Activated B cell treated with CpG ODN at 0.5 μM for 24 hours (primary cell): ENCODE measurements at regions of chr17 and their contacts with region 1.

Region 1: GRCh38 chr17:20121359-20122253 is 112.4 kb downstream of the SPECC1 start:
- DNase-seq: peak; percentile 52
- ATAC-seq: peak; percentile 71
- H3K4me3 Mint-ChIP-seq: no peak overlapping the region
- H3K27ac Mint-ChIP-seq: no peak overlapping the region
- H3K4me1 Mint-ChIP-seq: no peaks in the 10 kb centered on the region
- H3K27me3 Mint-ChIP-seq: peaks cover 1% of the 10 kb centered on the region
- CTCF ChIP-seq: peak; percentile 80

Region 2: GRCh38 chr17:19513897-19514488 is 607.6 kb before region 1 on chr17:
- CTCF ChIA-PET with region 1: no interaction called
- POLR2A ChIA-PET with region 1: no interaction called
- intact Hi-C with region 1: loop called (anchors 5 kb)
- DNase-seq: peak; percentile 54
- ATAC-seq: peak; percentile 85
- H3K4me3 Mint-ChIP-seq: no peak overlapping the region
- H3K27ac Mint-ChIP-seq: no peak overlapping the region
- H3K4me1 Mint-ChIP-seq: peaks cover 8% of the 10 kb centered on the region
- H3K27me3 Mint-ChIP-seq: no peaks in the 10 kb centered on the region
- CTCF ChIP-seq: peak; percentile 92

Region 3: DNA sequence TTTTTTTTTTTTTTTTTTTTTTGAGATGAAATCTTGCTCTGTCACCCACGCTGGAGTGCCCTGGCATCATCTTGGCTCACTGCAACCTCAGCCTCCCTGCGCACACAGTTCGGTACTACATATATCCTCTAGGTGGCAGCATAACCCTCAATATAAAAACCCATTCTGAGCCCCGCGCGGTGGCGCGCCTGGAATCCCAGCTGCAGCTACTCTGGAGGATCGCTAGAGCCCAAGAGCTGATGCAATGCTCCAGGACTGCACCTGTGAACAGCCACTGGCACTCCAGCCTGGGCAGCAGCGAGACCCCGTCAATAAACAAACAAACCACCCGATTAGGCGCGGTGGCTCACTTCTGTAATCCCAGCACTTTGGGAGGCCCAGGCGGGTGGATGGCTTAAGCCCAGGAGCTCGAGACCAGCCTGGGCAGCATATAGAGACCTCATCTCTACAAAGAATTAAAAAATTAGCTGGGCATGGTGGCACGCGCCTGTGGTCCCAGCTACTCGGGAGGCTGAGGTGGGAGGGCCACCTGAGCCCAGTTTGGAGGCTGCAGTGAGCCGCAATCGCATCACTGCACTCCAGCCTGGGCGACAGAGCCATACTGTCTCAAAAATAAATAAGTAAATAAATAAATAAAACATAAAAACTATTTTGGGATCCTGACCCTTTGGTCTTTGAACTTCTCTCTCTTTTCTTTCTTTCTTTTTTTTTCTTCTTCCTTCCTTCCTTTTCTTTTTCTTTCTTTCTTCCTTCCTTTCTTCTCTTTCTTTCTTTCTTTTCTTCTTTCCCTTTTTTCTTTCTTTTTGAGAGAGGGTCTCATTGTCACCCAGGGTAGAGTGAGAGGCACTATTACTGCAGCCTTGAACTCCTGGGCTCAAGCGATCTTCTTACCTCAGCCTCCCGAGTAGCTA is 128.5 kb before region 1 on chr17:
- CTCF ChIA-PET with region 1: interaction called, 25 read pairs
- POLR2A ChIA-PET with region 1: no interaction called
- intact Hi-C with region 1: loop called (anchors 1 kb)
- DNase-seq: peak; percentile 47
- ATAC-seq: peak; percentile 98
- H3K4me3 Mint-ChIP-seq: no peak overlapping the region
- H3K27ac Mint-ChIP-seq: no peak overlapping the region
- H3K4me1 Mint-ChIP-seq: peaks cover 4% of the 10 kb centered on the region
- H3K27me3 Mint-ChIP-seq: peaks cover 14% of the 10 kb centered on the region
- CTCF ChIP-seq: peak; percentile 25

Region 4: DNA sequence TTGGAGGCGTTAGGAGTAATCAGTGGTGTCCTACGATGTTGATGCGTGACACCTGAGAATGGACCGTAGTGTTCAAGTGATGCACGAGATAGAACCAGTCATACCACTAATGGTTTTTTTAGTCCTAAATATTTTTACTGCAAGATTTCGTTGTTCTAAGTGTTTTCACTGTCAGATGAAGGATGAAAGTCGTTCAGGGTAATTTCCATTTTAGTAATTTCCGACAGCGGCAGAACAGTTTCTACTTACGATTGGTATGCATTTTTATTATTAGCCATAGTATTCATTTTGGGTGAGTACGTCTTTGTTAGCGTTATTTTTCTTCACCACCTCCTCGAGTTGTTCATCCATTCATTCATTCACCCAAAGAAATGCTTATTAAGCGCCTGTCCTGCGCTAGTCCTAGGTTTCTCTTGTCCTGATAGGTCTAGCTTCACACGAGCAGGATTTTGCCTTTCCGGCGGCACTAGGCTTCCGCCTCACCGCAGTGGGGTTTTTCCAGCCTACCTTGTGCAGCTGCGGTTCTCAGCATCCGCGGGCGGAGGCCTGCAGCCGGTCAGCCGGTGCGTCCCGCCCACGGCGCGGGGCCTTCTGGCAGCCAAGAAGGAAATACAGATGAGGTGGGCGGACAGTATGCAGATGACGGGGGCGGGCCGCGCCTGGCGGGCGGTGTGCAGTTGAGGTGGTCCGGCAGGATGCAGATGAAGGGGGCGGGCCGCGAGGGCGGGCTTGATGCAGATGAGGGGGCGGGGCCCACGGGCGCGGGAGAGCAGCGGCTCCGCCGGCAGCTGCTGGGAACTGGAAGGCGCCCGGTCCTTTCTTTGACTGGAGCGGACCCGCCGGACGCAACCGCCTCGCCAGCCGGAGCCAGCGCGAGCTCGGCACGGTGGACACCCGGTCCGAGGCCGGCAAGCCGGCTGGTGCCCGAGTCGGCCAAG is 33.9 kb after region 1 on chr17:
- CTCF ChIA-PET with region 1: interaction called, 4 read pairs
- POLR2A ChIA-PET with region 1: no interaction called
- intact Hi-C with region 1: loop called (anchors 1 kb)
- DNase-seq: peak; percentile 99
- ATAC-seq: peak; percentile 93
- H3K4me3 Mint-ChIP-seq: no peak overlapping the region
- H3K27ac Mint-ChIP-seq: no peak overlapping the region
- H3K4me1 Mint-ChIP-seq: peaks cover 6% of the 10 kb centered on the region
- H3K27me3 Mint-ChIP-seq: no peaks in the 10 kb centered on the region
- CTCF ChIP-seq: no peak

Region 5: DNA sequence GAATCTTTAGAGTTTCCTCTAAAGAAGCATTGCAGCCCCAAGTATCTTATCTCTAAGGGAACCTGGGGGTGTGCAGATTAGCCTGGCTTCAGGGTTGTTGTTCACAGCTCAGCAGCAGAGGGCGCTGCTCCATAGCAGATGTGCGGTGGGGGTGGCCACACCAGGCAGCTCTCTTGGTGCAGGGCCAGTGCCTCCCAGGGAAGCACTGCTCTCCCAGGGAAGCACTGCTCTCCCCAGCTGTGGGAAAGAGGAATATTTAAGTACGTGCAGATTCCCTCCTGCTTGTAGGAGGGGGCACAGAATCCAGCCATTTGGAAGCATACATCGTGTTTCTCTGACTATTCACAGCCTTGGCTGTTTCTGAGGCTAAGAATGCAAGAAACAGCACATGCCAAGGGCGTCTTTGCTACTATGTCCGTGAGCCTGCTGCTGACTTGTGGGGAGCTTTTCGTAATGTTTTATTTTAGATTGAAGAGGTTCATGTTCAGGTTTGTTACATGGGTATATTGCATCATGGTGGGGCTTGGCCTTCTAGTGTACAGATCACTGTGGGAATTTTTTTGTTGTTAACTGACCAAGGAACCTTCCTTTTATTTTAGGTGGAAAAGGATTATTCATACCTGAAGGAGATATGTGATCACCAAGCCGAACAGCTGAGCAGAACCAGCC is 105.3 kb after region 1 on chr17:
- CTCF ChIA-PET with region 1: no interaction called
- POLR2A ChIA-PET with region 1: no interaction called
- intact Hi-C with region 1: loop called (anchors 1 kb)
- DNase-seq: peak; percentile 29
- ATAC-seq: peak; percentile 64
- H3K4me3 Mint-ChIP-seq: no peak overlapping the region
- H3K27ac Mint-ChIP-seq: no peak overlapping the region
- H3K4me1 Mint-ChIP-seq: no peaks in the 10 kb centered on the region
- H3K27me3 Mint-ChIP-seq: no peaks in the 10 kb centered on the region
- CTCF ChIP-seq: no peak

Region 6: DNA sequence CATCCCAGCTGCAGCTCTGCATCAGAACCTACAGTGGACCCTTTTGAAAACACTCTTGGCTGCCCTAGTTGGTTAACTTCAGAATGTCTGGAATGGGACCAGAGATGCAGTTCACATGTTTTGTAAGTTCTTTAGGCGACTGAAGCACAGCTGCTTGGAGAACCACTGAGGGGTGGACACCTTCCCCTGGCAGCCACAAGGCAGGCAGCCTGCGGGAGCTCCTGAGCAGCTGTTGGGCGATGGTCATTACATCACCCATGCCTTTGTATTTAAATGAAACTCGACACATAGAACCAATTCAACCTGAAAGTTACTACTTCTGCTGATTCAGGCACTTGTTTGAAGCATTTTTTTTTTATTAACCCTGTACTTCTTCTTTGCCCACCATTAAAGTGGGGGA is 194.2 kb after region 1 on chr17:
- CTCF ChIA-PET with region 1: interaction called, 14 read pairs
- POLR2A ChIA-PET with region 1: no interaction called
- intact Hi-C with region 1: loop called (anchors 1 kb)
- DNase-seq: no peak
- ATAC-seq: no peak
- H3K4me3 Mint-ChIP-seq: no peak overlapping the region
- H3K27ac Mint-ChIP-seq: no peak overlapping the region
- H3K4me1 Mint-ChIP-seq: peaks cover under 1% of the 10 kb centered on the region
- H3K27me3 Mint-ChIP-seq: no peaks in the 10 kb centered on the region
- CTCF ChIP-seq: no peak